ENCODE measurements at regions of chr2 and their contacts with region 1.

Region 1: DNA sequence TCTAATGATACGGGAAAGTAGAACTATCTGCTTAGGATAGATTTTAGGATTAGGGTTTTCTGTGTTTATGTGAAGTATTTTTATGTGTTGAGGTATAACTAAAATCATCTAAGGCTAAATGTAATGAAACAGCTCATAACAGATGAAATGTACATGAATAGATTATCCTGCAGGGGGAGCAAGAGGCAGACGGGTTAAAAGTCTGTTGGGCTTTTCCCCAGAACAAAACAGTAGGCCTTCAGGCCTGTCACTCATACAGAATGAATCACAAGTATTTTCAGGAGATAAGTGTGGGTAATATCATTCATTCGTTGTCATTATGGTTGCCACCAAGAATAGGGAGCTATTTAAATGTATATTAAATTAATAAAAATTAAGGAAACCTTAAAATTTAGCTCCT is 107.9 kb upstream of the IL1R2 start:
- DNase-seq: no peak
- H3K4me3 Mint-ChIP-seq: no peak overlapping the region
- H3K27ac Mint-ChIP-seq: no peak overlapping the region
- H3K4me1 Mint-ChIP-seq: peaks cover 6% of the 10 kb centered on the region
- H3K27me3 Mint-ChIP-seq: no peaks in the 10 kb centered on the region

Region 2: DNA sequence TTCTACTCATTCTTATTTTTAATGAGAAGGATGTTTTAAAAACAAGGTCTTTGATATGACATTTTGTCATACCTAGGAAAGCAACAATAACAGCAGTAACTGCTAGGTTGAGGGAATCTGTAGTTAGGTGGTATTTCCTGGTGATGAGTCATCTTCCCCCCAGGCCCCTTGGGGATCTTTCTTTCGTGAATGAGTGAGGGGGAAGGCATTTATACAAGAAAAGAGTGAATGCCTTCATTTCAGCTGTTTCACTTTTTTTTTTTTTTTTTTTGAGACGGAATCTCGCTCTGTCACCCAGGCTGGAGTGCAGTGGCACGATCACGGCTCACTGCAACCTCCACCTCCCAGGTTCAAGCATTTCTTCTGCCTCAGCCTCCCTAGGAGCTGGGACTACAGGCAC is 77.7 kb before region 1 on chr2:
- intact Hi-C with region 1: no loop called
- DNase-seq: no peak
- H3K4me3 Mint-ChIP-seq: no peak overlapping the region
- H3K27ac Mint-ChIP-seq: peak overlapping the region; percentile 70
- H3K4me1 Mint-ChIP-seq: peaks cover 42% of the 10 kb centered on the region
- H3K27me3 Mint-ChIP-seq: no peaks in the 10 kb centered on the region

Region 3: DNA sequence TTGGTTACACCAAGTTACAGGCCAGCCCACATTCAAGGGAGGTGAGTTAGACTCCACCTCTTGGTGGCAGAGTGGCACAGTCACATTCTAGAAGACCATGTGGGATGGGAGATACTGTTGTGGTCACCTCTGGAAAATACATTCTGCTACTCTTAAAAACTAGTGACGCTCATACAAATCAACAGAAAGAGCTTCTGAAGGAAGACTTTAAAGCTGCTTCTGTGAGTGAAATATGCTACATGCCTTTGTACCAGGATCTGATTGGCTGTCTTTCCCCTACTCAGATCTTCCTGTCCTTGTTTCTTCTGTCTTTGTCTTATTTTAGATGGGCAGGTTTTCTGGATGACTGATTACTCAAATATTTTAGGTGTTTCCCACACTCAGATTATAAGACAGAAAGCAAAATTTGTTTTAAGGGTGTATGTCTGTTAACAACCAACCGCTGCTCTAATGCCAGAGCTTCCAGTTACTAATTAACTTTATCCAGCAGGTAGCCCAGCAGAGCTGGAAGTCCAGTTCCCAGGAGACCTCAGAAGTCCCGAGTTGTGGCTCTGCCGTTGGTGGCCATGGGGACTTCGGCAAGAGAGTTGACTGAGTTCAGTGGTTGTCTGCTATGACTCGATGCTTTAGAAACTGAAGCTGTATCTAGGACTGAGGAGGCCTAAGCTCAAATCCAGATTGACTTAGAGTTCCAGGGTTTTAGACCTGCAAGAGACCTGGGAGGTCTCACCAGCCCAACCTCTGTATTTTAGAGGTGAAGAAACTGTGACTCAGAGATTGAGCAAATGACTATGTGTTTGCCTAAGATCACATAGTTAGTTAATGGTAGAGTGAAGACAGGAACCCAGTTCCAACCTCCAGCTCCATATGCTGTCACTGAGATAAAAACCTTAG is 115.3 kb after region 1 on chr2:
- intact Hi-C with region 1: loop called (anchors 1 kb)
- DNase-seq: no peak
- H3K4me3 Mint-ChIP-seq: no peak overlapping the region
- H3K27ac Mint-ChIP-seq: peak overlapping the region; percentile 76
- H3K4me1 Mint-ChIP-seq: peaks cover 27% of the 10 kb centered on the region
- H3K27me3 Mint-ChIP-seq: peaks cover 4% of the 10 kb centered on the region

Region 4: DNA sequence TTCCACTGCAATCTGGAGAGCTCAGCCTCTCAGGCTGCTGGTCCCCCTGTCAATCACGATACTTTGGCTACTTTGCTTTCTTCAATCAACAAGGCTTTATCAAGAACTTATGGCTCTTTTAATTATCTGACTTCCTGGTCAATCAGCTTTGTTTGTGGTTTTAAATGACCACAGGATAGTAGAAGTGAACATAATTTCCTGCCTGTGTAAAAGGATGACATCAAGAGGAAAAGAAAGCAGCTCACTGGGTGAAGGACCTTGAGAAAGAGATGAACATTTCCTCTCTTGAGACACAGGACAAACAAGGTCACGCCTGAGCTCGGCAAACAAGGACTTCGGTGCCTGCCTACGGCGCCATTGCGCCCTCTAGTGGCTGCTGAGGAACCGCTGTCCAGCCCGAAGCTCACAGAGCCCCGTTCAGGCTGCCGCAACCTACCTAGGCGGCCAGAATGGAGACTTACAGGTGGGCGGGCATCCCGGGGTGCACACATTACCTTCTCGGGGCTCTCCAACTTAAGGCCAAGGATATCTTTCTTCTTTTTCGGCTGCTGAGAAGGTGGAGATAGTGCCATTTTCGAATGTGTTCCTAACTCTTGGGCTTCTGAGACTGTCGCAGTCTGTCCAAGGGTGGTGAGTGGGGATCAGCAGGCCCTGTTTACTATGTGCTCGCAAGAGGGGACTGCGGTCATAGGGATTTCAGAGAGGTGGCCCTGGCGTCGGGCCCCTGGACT is 356.9 kb after region 1 on chr2:
- intact Hi-C with region 1: loop called (anchors 1 kb)
- DNase-seq: peak; percentile 82
- H3K4me3 Mint-ChIP-seq: peak overlapping the region; percentile 4
- H3K27ac Mint-ChIP-seq: peak overlapping the region; percentile 51
- H3K4me1 Mint-ChIP-seq: peaks cover 36% of the 10 kb centered on the region
- H3K27me3 Mint-ChIP-seq: no peaks in the 10 kb centered on the region

Region 5: DNA sequence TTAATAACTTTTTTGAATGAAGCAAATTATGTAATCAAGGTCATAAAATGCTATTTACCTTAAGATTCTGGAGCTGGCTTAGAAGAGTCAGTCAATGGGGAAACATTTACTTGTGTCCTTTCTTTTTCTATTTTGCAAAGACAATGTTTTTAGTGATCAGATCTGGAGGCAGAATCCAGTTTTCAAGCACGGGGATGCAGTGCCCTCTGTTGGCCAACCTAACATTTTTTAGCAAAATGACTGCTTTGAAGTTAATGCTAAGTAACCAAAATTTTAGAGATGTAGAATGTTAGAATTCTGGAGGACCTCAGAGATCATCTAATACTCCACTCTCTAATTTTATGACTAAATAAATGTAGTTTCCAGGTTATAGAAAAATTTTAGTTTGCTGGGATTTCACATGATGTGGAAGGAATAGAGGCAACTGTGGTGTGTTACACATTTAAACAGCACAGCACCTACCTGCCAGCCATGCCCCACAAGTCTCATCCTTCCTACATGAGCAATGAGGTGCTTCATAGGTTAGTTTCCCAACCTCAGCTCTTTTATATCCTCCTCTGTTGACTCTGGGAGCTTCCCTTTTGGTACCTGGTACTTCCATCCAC is 565.6 kb after region 1 on chr2:
- intact Hi-C with region 1: loop called (anchors 1 kb)
- DNase-seq: peak; percentile 54
- H3K4me3 Mint-ChIP-seq: no peak overlapping the region
- H3K27ac Mint-ChIP-seq: no peak overlapping the region
- H3K4me1 Mint-ChIP-seq: peaks cover 20% of the 10 kb centered on the region
- H3K27me3 Mint-ChIP-seq: no peaks in the 10 kb centered on the region

Measured in activated T-helper 1 cell treated with anti-CD3 and anti-CD28 coated beads, Interleukin-12 subunit alpha, Interleukin-12 subunit beta, Interleukin-2, Interleukin-4 antibody, amounts not matched to agents 30 ng/mL and 10 ng/mL and 1 ng/mL, durations not matched to agents 14 hours and 24 hours and 36 hours (primary cell).